ENCODE measurements at regions of chr10 and their contacts with region 1.

Region 1: GRCh38 chr10:6542999-6543430 is 37.1 kb downstream of the PRKCQ start:
- DNase-seq: peak; percentile 77
- ATAC-seq: peak; percentile 87
- H3K4me3 Mint-ChIP-seq: peak overlapping the region; percentile 83
- H3K27ac Mint-ChIP-seq: peak overlapping the region; percentile 99
- H3K4me1 Mint-ChIP-seq: peaks cover 77% of the 10 kb centered on the region
- H3K27me3 Mint-ChIP-seq: no peaks in the 10 kb centered on the region

Region 2: DNA sequence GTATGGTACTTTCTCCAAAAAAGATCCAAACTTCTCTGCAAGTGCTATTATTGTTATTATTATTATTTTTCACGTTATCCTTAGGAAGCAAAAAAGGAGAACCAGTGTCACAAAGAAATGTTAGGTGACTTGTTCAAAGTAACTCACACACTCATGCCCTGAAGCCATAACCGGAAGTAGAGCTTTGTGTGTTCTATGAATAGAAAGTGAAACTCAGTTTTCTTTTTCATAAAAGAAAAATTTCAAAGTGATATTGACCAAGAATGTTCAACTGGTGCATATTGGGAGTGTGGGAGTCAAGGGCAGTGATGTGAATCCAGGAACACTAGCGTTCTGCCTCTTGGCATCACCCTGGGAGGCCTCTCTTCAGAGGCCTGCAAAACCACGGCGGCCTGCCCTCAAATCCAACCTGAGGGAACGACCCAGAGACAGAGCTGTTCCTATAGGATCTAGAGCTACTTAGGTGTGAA is 69.1 kb before region 1 on chr10:
- CTCF ChIA-PET with region 1: interaction called, 26 read pairs
- POLR2A ChIA-PET with region 1: interaction called, 8 read pairs
- DNase-seq: peak; percentile 59
- ATAC-seq: peak; percentile 86
- H3K4me3 Mint-ChIP-seq: peak overlapping the region; percentile 90
- H3K27ac Mint-ChIP-seq: peak overlapping the region; percentile 99
- H3K4me1 Mint-ChIP-seq: peaks cover 64% of the 10 kb centered on the region
- H3K27me3 Mint-ChIP-seq: no peaks in the 10 kb centered on the region

Region 3: GRCh38 chr10:6493521-6494441 is 49.2 kb before region 1 on chr10:
- CTCF ChIA-PET with region 1: interaction called, 3 read pairs
- POLR2A ChIA-PET with region 1: interaction called, 17 read pairs
- DNase-seq: peak; percentile 24
- ATAC-seq: peak; percentile 16
- H3K4me3 Mint-ChIP-seq: no peak overlapping the region
- H3K27ac Mint-ChIP-seq: no peak overlapping the region
- H3K4me1 Mint-ChIP-seq: peaks cover 30% of the 10 kb centered on the region
- H3K27me3 Mint-ChIP-seq: no peaks in the 10 kb centered on the region

Region 4: DNA sequence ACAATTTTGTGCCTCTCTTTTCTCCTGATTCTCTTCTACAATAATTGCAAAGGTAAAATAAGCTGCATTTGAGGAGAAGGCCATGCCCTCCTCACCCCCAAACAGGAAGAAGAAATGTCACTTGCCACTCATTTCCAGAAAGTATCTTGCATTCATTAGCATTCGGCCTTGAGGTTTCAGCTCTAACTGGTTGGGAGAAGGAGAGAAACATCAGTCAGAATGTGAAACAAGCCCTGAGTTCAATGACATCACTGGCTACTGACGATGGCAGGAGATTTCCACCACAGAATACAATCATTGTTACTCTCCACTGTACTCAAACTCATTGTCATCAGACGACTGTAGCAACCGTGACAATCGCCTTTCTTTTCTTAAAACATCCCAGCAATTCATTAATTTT is 35.7 kb before region 1 on chr10:
- CTCF ChIA-PET with region 1: interaction called, 4 read pairs
- POLR2A ChIA-PET with region 1: interaction called, 12 read pairs
- DNase-seq: peak; percentile 67
- ATAC-seq: peak; percentile 82
- H3K4me3 Mint-ChIP-seq: no peak overlapping the region
- H3K27ac Mint-ChIP-seq: peak overlapping the region; percentile 87
- H3K4me1 Mint-ChIP-seq: peaks cover 61% of the 10 kb centered on the region
- H3K27me3 Mint-ChIP-seq: no peaks in the 10 kb centered on the region

Region 5: DNA sequence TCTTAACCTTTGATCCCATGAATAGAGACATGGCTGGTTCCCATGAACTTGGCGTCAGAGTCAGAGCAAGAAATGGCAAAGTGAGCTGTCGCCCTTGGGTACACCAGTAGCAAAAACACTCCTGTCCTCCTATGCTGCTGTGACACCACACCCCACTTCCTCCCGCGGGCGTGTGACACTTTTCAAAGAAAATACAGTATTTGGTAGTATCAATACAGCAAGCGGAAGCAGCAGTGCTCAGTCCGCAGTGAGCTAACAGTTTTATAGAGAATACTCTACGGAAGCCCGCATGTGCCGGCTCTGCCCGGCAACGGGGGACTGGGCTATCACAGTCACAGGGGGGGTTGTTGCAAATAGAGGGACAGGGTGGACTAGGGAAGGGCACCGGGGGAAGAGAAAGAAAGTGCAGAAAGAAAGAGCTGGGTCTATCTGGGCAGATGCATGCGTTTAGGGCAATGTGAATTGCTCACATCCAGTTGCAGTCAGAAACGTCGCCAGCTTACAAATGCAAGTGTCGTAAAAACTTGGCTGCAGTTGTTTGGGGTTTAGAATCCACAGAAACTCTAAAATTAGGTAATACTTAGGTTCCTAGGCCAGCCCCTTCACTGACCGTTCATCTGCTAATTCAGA is 12.7 kb before region 1 on chr10:
- CTCF ChIA-PET with region 1: interaction called, 57 read pairs
- POLR2A ChIA-PET with region 1: interaction called, 101 read pairs
- DNase-seq: peak; percentile 93
- ATAC-seq: peak; percentile 98
- H3K4me3 Mint-ChIP-seq: peak overlapping the region; percentile 77
- H3K27ac Mint-ChIP-seq: peak overlapping the region; percentile 98
- H3K4me1 Mint-ChIP-seq: peaks cover 85% of the 10 kb centered on the region
- H3K27me3 Mint-ChIP-seq: no peaks in the 10 kb centered on the region

Region 6: GRCh38 chr10:6563075-6563474 is 20.1 kb after region 1 on chr10:
- CTCF ChIA-PET with region 1: interaction called, 19 read pairs
- POLR2A ChIA-PET with region 1: interaction called, 27 read pairs
- DNase-seq: peak; percentile 67
- ATAC-seq: peak; percentile 82
- H3K4me3 Mint-ChIP-seq: peak overlapping the region; percentile 75
- H3K27ac Mint-ChIP-seq: peak overlapping the region; percentile 92
- H3K4me1 Mint-ChIP-seq: peaks cover 89% of the 10 kb centered on the region
- H3K27me3 Mint-ChIP-seq: no peaks in the 10 kb centered on the region

Measured in activated CD8-positive, alpha-beta T cell treated with anti-CD3 and anti-CD28 coated beads, Interleukin-2, amount 10 ng/mL, durations not matched to agents 7 days and 5 days (primary cell).